PC-3 (cell line): ENCODE measurements at regions of chr7 and their contacts with region 1.

Region 1: GRCh38 chr7:72493850-72494661 is 81.9 kb upstream of the CALN1 start:
- DNase-seq: peak; percentile 76
- ATAC-seq: peak; percentile 58
- H3K4me3 ChIP-seq: no peak overlapping the region
- H3K27ac ChIP-seq: no peak overlapping the region
- H3K4me1 ChIP-seq: no peaks in the 10 kb centered on the region
- H3K27me3 ChIP-seq: no peaks in the 10 kb centered on the region
- CTCF ChIP-seq: peak; percentile 74

Region 2: GRCh38 chr7:72183684-72184234 is 310.3 kb before region 1 on chr7:
- CTCF ChIA-PET with region 1: no interaction called
- POLR2A ChIA-PET with region 1: no interaction called
- intact Hi-C with region 1: loop called (anchors 5 kb)
- DNase-seq: peak; percentile 27
- ATAC-seq: no peak
- H3K4me3 ChIP-seq: no peak overlapping the region
- H3K27ac ChIP-seq: no peak overlapping the region
- H3K4me1 ChIP-seq: no peaks in the 10 kb centered on the region
- H3K27me3 ChIP-seq: no peaks in the 10 kb centered on the region
- CTCF ChIP-seq: peak; percentile 54

Region 3: GRCh38 chr7:72326206-72326922 is 167.7 kb before region 1 on chr7:
- CTCF ChIA-PET with region 1: no interaction called
- POLR2A ChIA-PET with region 1: no interaction called
- intact Hi-C with region 1: loop called (anchors 5 kb)
- DNase-seq: peak; percentile 92
- ATAC-seq: peak; percentile 87
- H3K4me3 ChIP-seq: no peak overlapping the region
- H3K27ac ChIP-seq: peak overlapping the region; percentile 61
- H3K4me1 ChIP-seq: peaks cover 17% of the 10 kb centered on the region
- H3K27me3 ChIP-seq: peaks cover 10% of the 10 kb centered on the region; the same call in 1 of the 2 replicates
- CTCF ChIP-seq: no peak

Region 4: GRCh38 chr7:72785166-72785955 is 291.3 kb after region 1 on chr7:
- CTCF ChIA-PET with region 1: no interaction called
- POLR2A ChIA-PET with region 1: no interaction called
- intact Hi-C with region 1: loop called (anchors 5 kb)
- DNase-seq: peak; percentile 6
- ATAC-seq: no peak
- H3K4me3 ChIP-seq: no peak overlapping the region
- H3K27ac ChIP-seq: no peak overlapping the region
- H3K4me1 ChIP-seq: peaks cover 9% of the 10 kb centered on the region
- H3K27me3 ChIP-seq: no peaks in the 10 kb centered on the region
- CTCF ChIP-seq: no peak